ENCODE measurements at regions of chr3 and their contacts with region 1.

Region 1: GRCh38 chr3:117997201-117998049 is 1037.2 kb downstream of the IGSF11 start:
- DNase-seq: peak; percentile 89
- H3K4me3 ChIP-seq: peak overlapping the region; percentile 51
- H3K27ac ChIP-seq: no peak overlapping the region
- H3K4me1 ChIP-seq: no peaks in the 10 kb centered on the region
- H3K27me3 ChIP-seq: no peaks in the 10 kb centered on the region
- CTCF ChIP-seq: peak; percentile 90

Region 2: DNA sequence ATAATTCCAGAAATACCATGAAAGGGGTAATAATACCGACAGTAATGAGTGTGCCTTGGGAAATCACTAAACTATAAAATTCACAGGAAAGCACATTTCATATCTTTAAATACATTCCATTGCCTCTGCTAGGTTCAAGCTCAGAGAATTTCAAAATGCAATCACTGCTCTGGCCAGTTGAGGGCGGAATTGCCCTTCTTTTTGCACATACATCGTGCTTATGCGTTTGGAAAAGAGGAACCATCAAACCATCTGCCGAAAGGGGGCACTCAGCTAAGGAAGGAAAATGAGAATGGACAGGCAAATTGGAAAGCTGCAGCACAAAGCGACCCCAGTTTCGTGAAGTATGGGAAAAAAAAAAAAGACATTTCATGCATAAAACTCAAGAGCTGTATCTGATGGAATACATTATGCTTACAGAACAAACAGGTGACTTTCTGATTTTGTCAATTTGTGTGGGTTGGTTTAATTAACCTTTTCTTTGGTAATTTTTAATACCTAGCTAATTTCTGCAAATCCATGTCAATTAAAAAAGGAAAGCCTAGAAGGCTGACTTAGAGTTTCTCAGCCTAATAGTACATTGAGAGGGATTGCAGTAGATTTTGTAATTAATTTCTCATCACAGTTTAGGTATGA is 1226.5 kb before region 1 on chr3:
- CTCF ChIA-PET with region 1: interaction called, 12 read pairs
- POLR2A ChIA-PET with region 1: no interaction called
- intact Hi-C with region 1: loop called (anchors 2 kb)
- DNase-seq: peak; percentile 91
- H3K4me3 ChIP-seq: no peak overlapping the region
- H3K27ac ChIP-seq: no peak overlapping the region
- H3K4me1 ChIP-seq: no peaks in the 10 kb centered on the region
- H3K27me3 ChIP-seq: no peaks in the 10 kb centered on the region
- CTCF ChIP-seq: peak; percentile 99

Region 3: DNA sequence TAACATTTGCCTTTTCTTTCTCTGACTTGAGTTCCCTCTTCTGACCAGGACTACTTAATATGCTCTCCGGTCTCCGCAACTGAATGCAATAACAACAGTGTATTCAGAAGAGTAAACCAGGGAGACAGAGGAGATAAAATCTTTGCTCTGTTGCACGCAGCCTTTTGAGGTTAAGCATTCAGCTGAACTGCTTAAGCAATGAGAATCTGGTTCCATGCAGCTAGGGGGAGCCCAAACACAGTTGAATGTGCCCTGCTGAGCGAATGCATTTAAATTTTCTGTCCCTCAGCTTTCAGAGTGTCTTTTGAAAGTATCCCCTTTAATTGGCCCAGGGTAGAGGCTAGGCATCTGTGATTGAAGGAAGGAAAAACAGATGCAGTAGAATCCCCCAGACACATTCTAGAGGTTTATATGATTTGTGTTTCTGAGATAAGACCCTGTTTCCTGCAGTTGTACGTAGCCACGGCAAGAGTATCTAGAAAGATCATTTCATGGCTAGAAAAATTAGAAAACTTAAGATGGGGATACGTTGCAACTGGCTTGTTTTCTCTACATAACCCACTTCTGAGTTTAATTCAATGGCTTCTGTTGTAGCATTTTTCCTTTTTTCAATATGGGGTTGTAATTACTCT is 978.2 kb before region 1 on chr3:
- CTCF ChIA-PET with region 1: no interaction called
- POLR2A ChIA-PET with region 1: no interaction called
- intact Hi-C with region 1: loop called (anchors 10 kb)
- DNase-seq: peak; percentile 73
- H3K4me3 ChIP-seq: no peak overlapping the region
- H3K27ac ChIP-seq: no peak overlapping the region
- H3K4me1 ChIP-seq: no peaks in the 10 kb centered on the region
- H3K27me3 ChIP-seq: no peaks in the 10 kb centered on the region
- CTCF ChIP-seq: peak; percentile 81

Region 4: GRCh38 chr3:117439812-117440211 is 557.6 kb before region 1 on chr3:
- CTCF ChIA-PET with region 1: no interaction called
- POLR2A ChIA-PET with region 1: no interaction called
- intact Hi-C with region 1: no loop called
- DNase-seq: peak; percentile 58
- H3K4me3 ChIP-seq: no peak overlapping the region
- H3K27ac ChIP-seq: no peak overlapping the region
- H3K4me1 ChIP-seq: no peaks in the 10 kb centered on the region
- H3K27me3 ChIP-seq: no peaks in the 10 kb centered on the region
- CTCF ChIP-seq: peak; percentile 59

Region 5: DNA sequence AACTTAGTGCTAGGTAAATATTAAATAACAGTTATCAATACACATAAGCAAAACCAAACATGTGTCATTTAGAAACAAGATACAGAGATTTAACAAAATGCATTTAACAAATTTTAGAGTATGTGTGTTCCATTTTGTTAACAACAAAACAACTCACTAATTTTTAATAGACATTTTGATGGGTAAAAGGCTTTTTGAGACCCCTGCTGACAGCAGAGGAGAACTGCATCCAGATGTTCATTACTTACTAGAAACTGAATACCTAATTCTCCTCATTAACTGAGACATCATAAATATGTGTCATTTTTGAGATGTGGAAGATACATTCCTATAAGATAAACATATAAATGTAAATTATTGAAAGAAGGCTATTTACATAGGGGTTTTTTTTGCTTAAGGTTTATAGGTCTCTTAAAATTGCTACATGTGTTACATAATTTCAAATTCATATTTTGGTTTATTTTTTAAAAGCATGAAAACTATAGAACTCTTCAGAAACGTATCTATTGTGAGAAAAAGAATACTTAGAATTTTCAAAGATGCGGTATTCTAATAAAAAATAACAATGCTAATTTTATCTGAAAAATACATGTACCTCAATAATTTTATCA is 278.0 kb before region 1 on chr3:
- CTCF ChIA-PET with region 1: no interaction called
- POLR2A ChIA-PET with region 1: no interaction called
- intact Hi-C with region 1: loop called (anchors 10 kb)
- DNase-seq: peak; percentile 37
- H3K4me3 ChIP-seq: no peak overlapping the region
- H3K27ac ChIP-seq: no peak overlapping the region
- H3K4me1 ChIP-seq: no peaks in the 10 kb centered on the region
- H3K27me3 ChIP-seq: no peaks in the 10 kb centered on the region
- CTCF ChIP-seq: peak; percentile 82

Region 6: GRCh38 chr3:118165413-118165812 is 168.0 kb after region 1 on chr3:
- CTCF ChIA-PET with region 1: no interaction called
- POLR2A ChIA-PET with region 1: no interaction called
- intact Hi-C with region 1: no loop called
- DNase-seq: no peak
- H3K4me3 ChIP-seq: no peak overlapping the region
- H3K27ac ChIP-seq: no peak overlapping the region
- H3K4me1 ChIP-seq: no peaks in the 10 kb centered on the region
- H3K27me3 ChIP-seq: no peaks in the 10 kb centered on the region
- CTCF ChIP-seq: no peak

Region 7: DNA sequence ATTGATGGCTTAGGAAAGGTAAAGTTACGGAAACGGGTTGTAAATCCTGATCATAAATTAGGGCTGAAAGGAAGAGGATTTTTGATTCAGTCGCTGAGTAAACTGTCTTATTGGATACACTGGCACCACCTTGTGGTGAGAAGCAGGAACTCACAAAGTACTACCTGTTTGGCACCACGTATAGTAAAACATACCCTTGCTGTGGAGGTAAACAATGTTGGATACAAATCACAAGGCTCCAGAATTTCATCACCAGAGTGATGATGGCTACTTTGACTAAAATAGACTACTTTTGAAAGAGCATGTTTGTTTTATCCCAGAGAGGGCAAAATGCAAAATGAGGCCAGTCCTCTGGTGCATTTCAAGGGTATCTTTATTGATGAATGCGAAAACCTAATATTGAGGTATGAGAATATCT is 820.3 kb after region 1 on chr3:
- CTCF ChIA-PET with region 1: no interaction called
- POLR2A ChIA-PET with region 1: no interaction called
- intact Hi-C with region 1: loop called (anchors 5 kb)
- DNase-seq: peak; percentile 68
- H3K4me3 ChIP-seq: no peak overlapping the region
- H3K27ac ChIP-seq: no peak overlapping the region
- H3K4me1 ChIP-seq: no peaks in the 10 kb centered on the region
- H3K27me3 ChIP-seq: no peaks in the 10 kb centered on the region
- CTCF ChIP-seq: peak; percentile 88

Measured in A673 (cell line).